T-cell (primary cell): ENCODE measurements at regions of chr13 and their contacts with region 1.

Region 1: DNA sequence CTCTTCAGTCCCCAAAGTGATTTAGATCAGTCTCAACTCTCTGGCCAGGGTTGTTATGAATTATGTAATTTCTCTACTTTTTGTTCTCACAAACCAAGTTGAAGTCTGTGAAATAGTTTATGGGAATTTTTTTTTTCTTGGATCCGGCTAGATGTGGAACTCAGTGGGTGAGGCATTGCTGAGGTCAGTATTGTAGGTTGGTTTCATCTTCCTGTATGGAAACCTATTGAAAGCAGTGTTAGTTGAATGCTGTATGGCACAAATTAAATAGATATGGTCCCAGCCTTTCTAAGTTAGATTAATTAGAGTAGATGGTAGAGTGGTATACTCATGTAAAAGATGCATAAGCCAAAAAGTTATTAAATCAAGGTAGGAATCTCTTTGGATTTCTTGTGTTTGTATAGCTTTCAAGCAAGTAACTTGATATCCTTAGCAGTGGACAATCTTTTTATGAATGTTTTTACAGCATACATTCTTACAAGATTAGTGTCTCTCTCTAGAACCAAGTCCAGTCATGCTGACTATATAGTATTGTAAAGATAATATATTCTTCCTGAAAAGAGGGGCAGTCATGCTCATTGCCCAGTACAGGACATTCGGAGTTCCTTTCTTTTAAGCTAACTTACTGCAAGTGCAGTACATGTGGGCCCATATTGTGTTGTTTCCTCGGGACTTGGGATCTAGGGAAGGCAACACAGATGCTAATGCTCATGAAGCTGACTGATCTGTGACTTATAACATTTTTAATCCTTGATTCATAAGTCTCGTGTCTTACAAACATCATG is 2541.1 kb downstream of the PCDH9 start:
- DNase-seq: no peak
- ATAC-seq: no peak
- H3K4me3 ChIP-seq: no peak overlapping the region
- H3K4me3 Mint-ChIP-seq: no peak overlapping the region
- H3K27ac ChIP-seq: no peak overlapping the region
- H3K27ac Mint-ChIP-seq: no peak overlapping the region
- H3K4me1 ChIP-seq: no peaks in the 10 kb centered on the region
- H3K4me1 Mint-ChIP-seq: no peaks in the 10 kb centered on the region
- H3K27me3 ChIP-seq: no peaks in the 10 kb centered on the region
- H3K27me3 Mint-ChIP-seq: no peaks in the 10 kb centered on the region

Region 2: GRCh38 chr13:64672751-64673150 is 16.3 kb before region 1 on chr13:
- CTCF ChIA-PET with region 1: no interaction called
- POLR2A ChIA-PET with region 1: interaction called in 1 of 2 experiments, 10 read pairs
- DNase-seq: no peak
- ATAC-seq: no peak
- H3K4me3 ChIP-seq: no peak overlapping the region
- H3K4me3 Mint-ChIP-seq: no peak overlapping the region
- H3K27ac ChIP-seq: no peak overlapping the region
- H3K27ac Mint-ChIP-seq: no peak overlapping the region
- H3K4me1 ChIP-seq: no peaks in the 10 kb centered on the region
- H3K4me1 Mint-ChIP-seq: no peaks in the 10 kb centered on the region
- H3K27me3 ChIP-seq: no peaks in the 10 kb centered on the region
- H3K27me3 Mint-ChIP-seq: no peaks in the 10 kb centered on the region